ENCODE measurements at regions of chr2 and their contacts with region 1.

Region 1: GRCh38 chr2:101518578-101519492 is 43.9 kb upstream of the RFX8 start:
- DNase-seq: peak; percentile 61 to 84
- H3K4me3 ChIP-seq: no peak overlapping the region
- H3K27ac ChIP-seq: peak overlapping the region in 4 of 5 donors; percentile 10 to 82 (median 38)
- H3K4me1 ChIP-seq: peaks cover 5 to 49% (median 22%) of the 10 kb centered on the region in 4 donors
- H3K27me3 ChIP-seq: no peaks in the 10 kb centered on the region
- CTCF ChIP-seq: peak in 3 of 7 experiments; percentile 31 to 59 (median 42)
- EP300 ChIP-seq: no peak
- POLR2A ChIP-seq: no peak

Region 2: DNA sequence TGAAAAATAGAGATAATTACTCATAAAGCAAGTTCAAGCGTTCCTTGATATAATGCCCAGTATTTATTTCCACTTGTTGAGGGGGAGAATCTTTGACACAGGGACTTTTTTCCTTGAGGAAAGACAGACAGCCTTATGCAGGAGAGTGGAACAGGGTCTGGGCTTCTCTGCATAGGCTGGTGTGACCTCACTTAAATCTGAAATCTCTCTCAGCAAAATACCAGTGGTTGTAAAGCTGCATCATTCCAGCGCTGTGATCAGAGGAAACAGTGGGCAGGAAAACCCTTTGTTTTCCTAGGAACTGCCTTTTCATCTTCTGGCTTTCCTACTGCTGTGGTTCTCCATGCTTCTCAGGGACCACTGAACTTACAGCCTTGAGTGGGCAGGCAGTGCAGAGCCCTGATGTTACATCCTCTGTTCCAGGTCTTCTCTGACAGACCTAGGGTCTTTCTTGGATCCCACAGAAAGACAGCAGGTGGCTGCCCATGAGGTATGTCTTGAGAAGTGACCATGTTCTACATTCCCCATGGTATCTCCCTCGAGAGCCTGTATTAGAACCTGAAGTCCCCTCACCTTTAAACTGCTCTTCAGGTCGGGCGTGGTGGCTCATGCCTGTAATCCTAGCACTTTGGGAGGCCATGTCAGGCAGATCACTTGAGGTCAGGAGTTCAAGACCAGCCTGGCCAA is 161.1 kb after region 1 on chr2:
- intact Hi-C with region 1: loop called (anchors 10 kb)
- DNase-seq: peak in 1 of 2 donors; percentile 26
- H3K4me3 ChIP-seq: no peak overlapping the region
- H3K27ac ChIP-seq: no peak overlapping the region
- H3K4me1 ChIP-seq: no peaks in the 10 kb centered on the region
- H3K27me3 ChIP-seq: no peaks in the 10 kb centered on the region
- CTCF ChIP-seq: no peak
- EP300 ChIP-seq: no peak
- POLR2A ChIP-seq: no peak

Region 3: DNA sequence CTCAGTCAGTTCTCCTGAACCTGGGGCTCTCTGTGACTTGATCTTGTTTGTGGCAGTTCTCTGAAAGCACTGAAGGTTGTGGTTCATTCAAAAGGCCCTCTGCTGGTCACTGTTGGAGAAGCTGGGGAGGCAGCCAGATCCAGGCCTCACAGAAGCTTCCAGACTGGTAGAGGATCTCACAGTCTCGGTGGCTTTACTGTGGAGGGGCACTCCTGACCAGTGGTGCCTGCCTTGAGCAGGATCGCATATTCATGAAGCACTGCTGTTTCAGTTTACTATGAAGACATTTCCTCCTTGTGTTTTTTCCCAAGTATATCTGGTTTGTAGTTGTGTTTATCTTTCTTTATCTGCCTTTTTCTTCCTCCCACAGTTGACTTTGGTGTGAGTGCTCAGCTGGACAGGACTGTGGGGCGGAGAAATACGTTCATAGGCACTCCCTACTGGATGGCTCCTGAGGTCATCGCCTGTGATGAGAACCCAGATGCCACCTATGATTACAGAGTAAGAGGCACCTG is 312.6 kb after region 1 on chr2:
- intact Hi-C with region 1: loop called (anchors 5 kb)
- DNase-seq: peak; percentile 78 to 89
- H3K4me3 ChIP-seq: no peak overlapping the region
- H3K27ac ChIP-seq: peak overlapping the region; percentile 20 to 70 (median 69)
- H3K4me1 ChIP-seq: peaks cover 26 to 57% (median 42%) of the 10 kb centered on the region in 4 donors
- H3K27me3 ChIP-seq: no peaks in the 10 kb centered on the region
- CTCF ChIP-seq: peak in 5 of 7 experiments; percentile 71 to 81 (median 75)
- EP300 ChIP-seq: no peak
- POLR2A ChIP-seq: no peak